Panc1 (cell line): ENCODE measurements at regions of chr12 and their contacts with region 1.

Region 1: DNA sequence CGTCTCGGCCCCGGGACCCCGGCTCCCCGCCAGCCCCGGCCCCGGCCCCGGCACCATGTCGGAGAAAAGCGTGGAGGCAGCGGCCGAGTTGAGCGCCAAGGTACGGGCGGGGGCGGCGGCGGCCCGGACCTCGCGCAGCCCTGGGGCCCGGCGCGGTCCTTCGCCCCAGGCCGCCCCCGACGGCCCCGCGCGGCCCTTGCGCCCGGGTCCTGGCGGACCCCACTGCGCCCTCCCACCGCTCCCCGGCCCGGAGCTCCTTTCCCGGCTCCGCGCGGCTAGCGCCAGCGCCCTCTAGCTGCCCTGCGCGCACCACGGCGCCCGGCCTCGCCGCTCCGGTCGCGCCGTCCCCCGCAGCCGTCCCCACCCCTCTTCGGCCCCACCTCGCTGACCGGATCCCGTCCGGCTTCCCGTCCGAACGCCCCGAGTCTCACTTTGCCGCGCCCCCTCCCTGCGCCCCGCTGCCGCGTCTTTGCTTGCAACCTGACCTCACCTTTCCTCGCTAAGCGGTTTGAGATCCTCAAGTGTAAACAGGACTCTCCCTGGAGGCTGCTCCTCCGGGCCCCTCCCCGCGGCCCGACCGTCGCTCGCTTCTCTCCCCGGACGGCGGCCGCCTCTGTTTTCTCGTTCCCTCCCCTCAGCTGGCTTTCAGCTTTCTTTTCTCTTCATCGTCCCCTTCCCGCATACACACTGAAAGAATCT is 637 bp downstream of the PTMS start:
- DNase-seq: no peak
- ATAC-seq: peak; percentile 56
- H3K4me3 ChIP-seq: peak overlapping the region; percentile 90 to 91
- H3K27ac ChIP-seq: peak overlapping the region; percentile 80
- H3K4me1 ChIP-seq: peaks cover 45% of the 10 kb centered on the region
- H3K27me3 ChIP-seq: no peaks in the 10 kb centered on the region
- CTCF ChIP-seq: peak; percentile 87

Region 2: DNA sequence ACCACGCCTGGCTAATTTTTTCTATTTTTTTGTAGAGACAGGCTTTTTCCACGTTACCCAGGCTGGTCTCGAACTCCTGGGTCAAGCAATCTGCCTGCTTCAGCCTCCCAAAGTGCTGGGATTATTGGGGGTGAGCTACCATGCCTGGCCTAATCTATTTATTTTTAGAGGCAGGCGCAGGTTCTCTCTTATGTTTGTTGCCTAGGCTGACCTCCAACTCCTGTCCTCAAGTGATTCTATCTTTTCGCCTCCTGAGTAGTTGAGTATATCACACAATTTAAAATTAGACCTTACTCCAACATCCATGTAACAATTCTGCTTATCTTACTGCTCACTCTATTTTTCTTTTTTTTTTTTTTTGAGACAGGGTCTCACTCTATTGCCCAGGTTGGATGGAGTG is 112.8 kb before region 1 on chr12:
- CTCF ChIA-PET with region 1: no interaction called
- POLR2A ChIA-PET with region 1: no interaction called
- in situ Hi-C with region 1: no loop called
- intact Hi-C with region 1: no loop called
- DNase-seq: no peak
- ATAC-seq: no peak
- H3K4me3 ChIP-seq: no peak overlapping the region
- H3K27ac ChIP-seq: no peak overlapping the region
- H3K4me1 ChIP-seq: no peaks in the 10 kb centered on the region
- H3K27me3 ChIP-seq: no peaks in the 10 kb centered on the region
- CTCF ChIP-seq: no peak

Region 3: DNA sequence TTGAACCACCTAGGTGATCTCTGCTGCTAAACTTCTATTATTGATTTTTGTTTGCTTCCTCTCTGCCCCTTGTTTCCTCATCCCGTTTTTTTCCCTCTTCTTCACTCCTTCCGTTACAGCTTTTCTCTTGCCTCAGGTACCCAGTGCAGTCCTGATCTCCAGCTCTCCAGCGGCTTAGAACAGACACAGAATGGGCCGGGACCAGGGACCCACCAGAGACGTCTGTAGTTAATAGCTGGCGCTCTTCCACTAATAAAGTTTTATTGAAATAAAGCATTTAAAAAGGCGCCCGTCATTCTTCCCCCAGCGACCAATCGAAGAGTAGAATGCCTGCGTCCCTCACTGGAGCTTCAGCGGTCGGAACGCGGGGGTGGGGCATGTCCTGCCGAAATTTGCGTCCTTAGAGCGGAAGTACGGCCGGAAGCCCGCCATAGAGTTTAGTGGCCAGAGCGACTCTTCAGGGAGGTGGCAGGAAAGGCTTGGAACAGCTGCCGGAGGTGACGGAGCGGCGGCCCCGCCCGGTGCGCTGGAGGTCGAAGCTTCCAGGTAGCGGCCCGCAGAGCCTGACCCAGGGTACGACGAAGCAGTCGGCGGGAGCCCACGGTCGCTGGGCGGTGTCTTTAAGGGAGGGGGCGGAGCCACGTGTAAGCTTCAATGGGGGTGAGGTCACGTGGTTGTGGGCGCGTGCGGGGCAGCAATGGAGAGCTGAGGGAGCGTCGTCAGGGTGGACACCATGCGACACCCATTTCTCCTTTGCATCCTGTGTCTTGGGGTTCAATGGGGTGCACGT is 43.0 kb before region 1 on chr12 and contains the start of gene COPS7A:
- CTCF ChIA-PET with region 1: interaction called, 15 read pairs
- POLR2A ChIA-PET with region 1: no interaction called
- in situ Hi-C with region 1: no loop called
- intact Hi-C with region 1: no loop called
- DNase-seq: peak; percentile 89
- ATAC-seq: peak; percentile 98
- H3K4me3 ChIP-seq: peak within 1 kb of the TSS; percentile 57 to 80
- H3K27ac ChIP-seq: peak within 1 kb of the TSS; percentile 94
- H3K4me1 ChIP-seq: peaks cover 3% of the 10 kb centered on the region; the same call in 1 of the 2 replicates
- H3K27me3 ChIP-seq: no peaks in the 10 kb centered on the region
- CTCF ChIP-seq: no peak
- total RNA-seq, gene COPS7A: 37.5 TPM

Region 4: DNA sequence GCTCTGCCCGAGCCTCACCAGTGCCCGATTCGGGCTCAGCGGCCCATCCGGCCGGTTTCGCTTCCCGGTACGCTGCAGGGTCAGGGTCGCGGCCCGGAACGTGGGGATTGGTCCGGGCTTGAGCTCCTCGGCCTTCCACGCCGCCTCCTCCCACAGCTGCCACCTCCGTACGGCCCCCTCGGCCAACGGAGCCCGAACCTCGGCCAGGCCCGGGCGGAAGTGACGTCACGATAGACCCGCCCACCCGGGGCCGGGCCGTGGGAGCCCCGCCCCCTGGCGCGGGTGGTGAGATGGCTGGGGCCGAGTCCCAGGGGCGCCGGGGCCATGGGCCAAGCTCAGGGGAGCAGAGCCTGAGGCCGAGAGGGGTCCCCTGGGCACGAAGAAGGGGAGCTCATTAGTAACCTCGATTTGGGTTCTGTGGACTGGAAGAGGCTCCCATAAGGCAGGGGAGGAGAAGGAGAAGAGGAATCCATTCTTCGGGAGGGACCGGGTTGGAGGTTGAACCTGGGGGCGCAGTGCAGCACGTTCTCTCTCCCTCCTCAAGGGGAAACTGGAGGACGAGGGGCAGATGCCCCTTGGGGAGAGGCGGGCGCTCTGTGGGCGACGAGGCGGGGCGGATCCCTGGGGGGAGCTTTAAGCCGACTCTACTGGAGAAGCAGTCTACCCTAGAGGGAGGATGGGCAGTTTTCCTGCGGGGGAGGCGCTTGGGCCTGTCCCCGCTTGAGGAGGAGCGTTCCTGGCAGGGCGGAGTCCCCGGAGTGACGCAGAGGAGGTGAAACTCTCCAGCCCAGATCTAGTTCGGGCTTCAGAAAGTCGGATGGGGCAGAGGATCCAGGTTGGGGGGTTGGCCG is 13.7 kb before region 1 on chr12 and contains the start of gene MLF2:
- CTCF ChIA-PET with region 1: interaction called, 12 read pairs
- POLR2A ChIA-PET with region 1: interaction called, 4 read pairs
- in situ Hi-C with region 1: no loop called
- intact Hi-C with region 1: no loop called
- DNase-seq: peak; percentile 91
- ATAC-seq: peak; percentile 95
- H3K4me3 ChIP-seq: peak within 1 kb of the TSS; percentile 85
- H3K27ac ChIP-seq: peak within 1 kb of the TSS; percentile 94
- H3K4me1 ChIP-seq: peaks cover 14% of the 10 kb centered on the region
- H3K27me3 ChIP-seq: no peaks in the 10 kb centered on the region
- CTCF ChIP-seq: no peak
- total RNA-seq, gene MLF2: 175 TPM

Region 5: GRCh38 chr12:6807170-6807569 is 40.4 kb after region 1 on chr12:
- CTCF ChIA-PET with region 1: no interaction called
- POLR2A ChIA-PET with region 1: interaction called, 10 read pairs
- in situ Hi-C with region 1: no loop called
- intact Hi-C with region 1: no loop called
- DNase-seq: no peak
- ATAC-seq: no peak
- H3K4me3 ChIP-seq: no peak overlapping the region
- H3K27ac ChIP-seq: no peak overlapping the region
- H3K4me1 ChIP-seq: no peaks in the 10 kb centered on the region
- H3K27me3 ChIP-seq: no peaks in the 10 kb centered on the region
- CTCF ChIP-seq: no peak

Region 6: GRCh38 chr12:6867413-6868210 is 100.8 kb after region 1 on chr12 and contains the start of gene TPI1:
- CTCF ChIA-PET with region 1: interaction called, 5 read pairs
- POLR2A ChIA-PET with region 1: interaction called, 17 read pairs
- in situ Hi-C with region 1: no loop called
- intact Hi-C with region 1: no loop called
- DNase-seq: no peak
- ATAC-seq: peak; percentile 78
- H3K4me3 ChIP-seq: peak within 1 kb of the TSS; percentile 61 to 92
- H3K27ac ChIP-seq: peak within 1 kb of the TSS; percentile 82
- H3K4me1 ChIP-seq: peaks cover 28% of the 10 kb centered on the region
- H3K27me3 ChIP-seq: no peaks in the 10 kb centered on the region
- CTCF ChIP-seq: no peak
- total RNA-seq, gene TPI1: 693 TPM